ENCODE measurements at regions of chr3 and their contacts with region 1.

Region 1: GRCh38 chr3:58305882-58306711 is at the starts of genes HTD2 and RPP14:
- DNase-seq: peak; percentile 99
- ATAC-seq: peak; percentile 91
- H3K4me3 Mint-ChIP-seq: peak within 1 kb of the TSS; percentile 98
- H3K27ac Mint-ChIP-seq: peak within 1 kb of the TSS; percentile 99
- H3K4me1 Mint-ChIP-seq: peaks cover 32% of the 10 kb centered on the region
- H3K27me3 Mint-ChIP-seq: peaks cover 13% of the 10 kb centered on the region
- total RNA-seq, gene HTD2: 6.9 to 7.4 TPM
- total RNA-seq, gene RPP14: 12.9 to 16.9 TPM

Region 2: GRCh38 chr3:58177747-58178527 is 128.2 kb before region 1 on chr3:
- CTCF ChIA-PET with region 1: interaction called, 25 read pairs
- DNase-seq: peak; percentile 91
- ATAC-seq: peak; percentile 94
- H3K4me3 Mint-ChIP-seq: peak overlapping the region; percentile 62
- H3K27ac Mint-ChIP-seq: no peak overlapping the region
- H3K4me1 Mint-ChIP-seq: peaks cover 21% of the 10 kb centered on the region
- H3K27me3 Mint-ChIP-seq: peaks cover 6% of the 10 kb centered on the region

Region 3: GRCh38 chr3:58317811-58318210 is 11.7 kb after region 1 on chr3:
- CTCF ChIA-PET with region 1: interaction called, 54 read pairs
- DNase-seq: no peak
- ATAC-seq: no peak
- H3K4me3 Mint-ChIP-seq: no peak overlapping the region
- H3K27ac Mint-ChIP-seq: no peak overlapping the region
- H3K4me1 Mint-ChIP-seq: peaks cover 6% of the 10 kb centered on the region
- H3K27me3 Mint-ChIP-seq: no peaks in the 10 kb centered on the region

Region 4: DNA sequence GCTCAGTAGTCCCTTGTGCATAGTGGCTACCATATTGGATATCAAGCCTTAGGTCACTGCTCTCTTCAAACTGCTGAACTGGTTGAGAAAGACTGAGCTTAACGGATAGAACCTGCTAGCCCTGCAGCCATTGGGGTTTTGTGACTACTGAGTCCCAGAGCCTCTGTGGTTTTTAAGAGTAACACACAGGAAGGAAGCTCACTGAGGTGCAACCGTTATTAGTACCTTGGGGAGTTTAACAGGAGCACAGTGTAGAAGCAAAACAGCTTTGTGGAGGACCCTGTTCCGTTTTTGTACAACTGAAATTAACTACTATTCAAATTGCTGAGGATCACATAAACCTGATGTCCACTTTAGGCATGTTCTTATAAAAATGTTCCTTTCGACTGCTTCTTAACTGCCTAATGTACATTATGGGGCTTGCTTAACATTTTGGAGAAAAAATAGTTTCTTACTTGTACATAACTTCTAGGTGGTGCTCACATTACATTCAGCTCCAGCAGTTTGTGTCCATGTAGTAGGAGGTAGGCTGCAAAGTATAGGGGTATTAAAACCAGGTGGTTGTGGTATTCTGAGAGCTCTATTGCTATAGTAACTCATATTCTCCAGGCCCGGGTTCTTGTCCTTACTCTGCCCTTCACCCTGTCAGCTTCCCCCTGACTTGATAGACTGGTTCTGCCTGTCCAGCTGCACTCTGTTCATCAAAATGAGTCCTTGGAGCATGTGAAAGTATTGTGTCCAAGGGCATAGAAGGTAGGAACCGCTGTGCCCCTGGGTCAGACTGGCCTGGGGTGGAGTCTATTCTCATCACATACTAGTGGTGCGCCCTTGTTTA is 43.9 kb after region 1 on chr3:
- CTCF ChIA-PET with region 1: interaction called, 12 read pairs
- DNase-seq: peak; percentile 80
- ATAC-seq: peak; percentile 68
- H3K4me3 Mint-ChIP-seq: peak overlapping the region; percentile 61
- H3K27ac Mint-ChIP-seq: peak overlapping the region; percentile 94
- H3K4me1 Mint-ChIP-seq: peaks cover 86% of the 10 kb centered on the region
- H3K27me3 Mint-ChIP-seq: no peaks in the 10 kb centered on the region

Region 5: GRCh38 chr3:58433400-58434169 is 127.5 kb after region 1 on chr3 and contains the start of gene PDHB:
- CTCF ChIA-PET with region 1: interaction called, 11 read pairs
- DNase-seq: peak; percentile 93
- ATAC-seq: peak; percentile 97
- H3K4me3 Mint-ChIP-seq: peak within 1 kb of the TSS; percentile 83
- H3K27ac Mint-ChIP-seq: peak within 1 kb of the TSS; percentile 79
- H3K4me1 Mint-ChIP-seq: peaks cover 24% of the 10 kb centered on the region
- H3K27me3 Mint-ChIP-seq: peaks cover 7% of the 10 kb centered on the region
- total RNA-seq, gene PDHB: 43.4 to 60.6 TPM

Region 6: DNA sequence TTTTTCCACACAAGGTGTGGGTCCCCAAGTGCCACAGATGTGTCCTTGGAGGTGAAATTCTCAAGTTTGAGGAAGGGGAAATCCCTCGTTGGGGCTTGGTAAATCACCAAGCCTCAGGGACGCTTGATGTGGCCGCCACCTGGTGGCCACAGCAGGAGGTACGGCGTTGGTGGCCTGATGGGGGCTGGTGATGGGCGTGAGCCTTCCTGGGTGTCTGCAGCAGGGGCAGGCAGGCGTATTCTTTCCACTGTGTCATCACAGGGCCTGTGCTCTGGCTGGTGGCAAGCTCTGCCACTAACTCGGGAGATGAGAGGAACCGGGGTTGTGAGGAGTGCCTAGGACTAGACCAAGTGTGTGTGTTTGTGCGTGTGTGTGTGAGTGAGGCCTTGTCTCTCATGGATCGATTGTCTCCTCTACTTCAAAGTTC is 226.7 kb after region 1 on chr3:
- CTCF ChIA-PET with region 1: interaction called, 25 read pairs
- DNase-seq: peak; percentile 85
- ATAC-seq: peak; percentile 93
- H3K4me3 Mint-ChIP-seq: no peak overlapping the region
- H3K27ac Mint-ChIP-seq: no peak overlapping the region
- H3K4me1 Mint-ChIP-seq: peaks cover 15% of the 10 kb centered on the region
- H3K27me3 Mint-ChIP-seq: peaks cover 2% of the 10 kb centered on the region

Measured in activated CD8-positive, alpha-beta memory T cell treated with anti-CD3 and anti-CD28 coated beads, Interleukin-2, amount 10 ng/mL, durations not matched to agents 7 days and 5 days (primary cell).